ENCODE measurements at regions of chr2 and their contacts with region 1.

Region 1: DNA sequence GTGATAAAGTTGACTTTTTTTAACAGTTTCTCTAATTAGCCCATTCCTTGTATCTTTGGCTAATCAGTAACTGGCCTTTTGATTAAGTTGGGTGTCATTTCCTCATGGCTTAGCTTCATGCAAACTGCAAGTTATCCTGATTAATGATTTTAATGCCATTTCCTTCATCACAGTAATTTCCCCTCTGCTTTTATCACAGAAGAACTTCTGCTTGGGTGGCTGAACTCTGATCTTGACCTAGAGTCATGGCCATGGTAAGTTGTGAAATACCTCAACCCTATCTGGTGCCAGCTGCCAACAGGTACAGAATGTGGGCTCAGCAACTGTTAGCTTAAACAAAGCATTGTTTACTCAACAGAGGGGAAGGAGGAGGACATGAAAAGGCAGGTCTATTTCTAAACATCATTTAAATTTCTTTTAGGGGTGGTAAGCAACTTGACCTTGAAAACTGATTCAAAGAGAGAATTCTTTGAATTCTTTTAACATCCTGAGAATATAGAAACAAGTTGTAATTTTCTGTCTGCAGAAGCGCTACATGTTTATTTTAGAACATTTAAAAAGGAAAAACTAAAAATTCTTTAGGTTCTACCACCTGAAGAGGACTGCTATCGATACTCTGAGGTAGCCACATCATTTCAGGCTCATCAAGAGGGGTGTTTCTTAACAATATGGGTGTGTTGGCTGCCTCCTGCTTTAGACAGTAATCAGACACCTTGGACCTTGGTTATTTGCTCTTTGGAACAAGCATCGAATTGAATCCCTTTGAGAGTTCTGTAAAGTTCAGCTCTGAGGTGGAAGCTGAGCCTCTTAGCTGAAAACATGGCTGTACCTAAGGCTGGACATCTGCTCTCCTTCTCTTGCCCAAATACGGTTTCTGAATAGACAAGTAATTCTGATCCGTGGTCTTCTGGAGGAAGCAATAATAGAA is 39.7 kb downstream of the ANXA4 start:
- DNase-seq: peak; percentile 73
- H3K4me3 Mint-ChIP-seq: peak overlapping the region; percentile 15
- H3K27ac Mint-ChIP-seq: peak overlapping the region; percentile 86
- H3K4me1 Mint-ChIP-seq: peaks cover 71% of the 10 kb centered on the region
- H3K27me3 Mint-ChIP-seq: no peaks in the 10 kb centered on the region
- CTCF ChIP-seq: no peak

Region 2: DNA sequence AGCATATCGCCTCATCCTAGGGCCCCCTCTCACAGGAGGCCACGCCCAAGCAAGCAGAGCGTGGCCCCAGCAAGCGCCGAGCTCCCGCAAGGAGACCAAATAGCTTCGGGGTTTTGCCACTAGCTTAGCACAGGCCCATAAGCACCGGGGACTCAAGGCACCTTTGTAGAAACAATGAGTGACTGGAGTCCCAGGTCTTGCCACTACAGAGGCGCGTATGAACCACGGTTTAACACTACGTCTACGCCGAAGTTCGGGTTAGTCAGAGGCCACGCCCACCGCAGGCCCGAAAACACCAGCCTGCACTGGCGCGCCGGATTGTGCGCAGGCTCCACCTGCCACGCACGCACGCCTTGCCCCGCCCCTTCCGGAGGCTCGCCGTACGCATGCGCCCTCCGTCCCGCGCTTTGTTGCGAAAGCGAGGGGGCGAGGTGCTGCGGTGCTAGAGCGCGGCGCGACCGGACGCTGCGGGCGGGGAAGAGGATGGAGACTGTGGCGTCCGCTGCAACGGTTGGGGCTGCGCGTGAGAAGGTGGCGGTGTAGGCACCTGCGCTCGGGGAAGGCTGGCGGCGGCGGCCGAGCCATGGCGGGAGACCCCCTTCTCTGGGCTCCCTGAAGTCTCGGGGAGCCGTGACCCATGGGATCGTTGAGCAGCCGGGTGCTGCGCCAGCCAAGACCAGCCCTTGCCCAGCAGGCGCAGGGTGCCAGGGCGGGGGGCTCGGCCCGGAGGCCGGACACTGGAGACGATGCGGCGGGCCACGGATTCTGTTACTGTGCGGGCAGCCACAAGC is 47.9 kb after region 1 on chr2 and contains the start of gene GMCL1:
- CTCF ChIA-PET with region 1: no interaction called
- intact Hi-C with region 1: loop called (anchors 5 kb)
- DNase-seq: peak; percentile 98
- H3K4me3 Mint-ChIP-seq: peak within 1 kb of the TSS; percentile 98
- H3K27ac Mint-ChIP-seq: peak within 1 kb of the TSS; percentile 94
- H3K4me1 Mint-ChIP-seq: peaks cover 34% of the 10 kb centered on the region
- H3K27me3 Mint-ChIP-seq: no peaks in the 10 kb centered on the region
- CTCF ChIP-seq: no peak
- total RNA-seq, gene GMCL1: 63.8 and 76.4 TPM in 2 replicates

Region 3: GRCh38 chr2:69917854-69918253 is 136.3 kb after region 1 on chr2:
- CTCF ChIA-PET with region 1: no interaction called
- intact Hi-C with region 1: no loop called
- DNase-seq: no peak
- H3K4me3 Mint-ChIP-seq: peak overlapping the region; percentile 76
- H3K27ac Mint-ChIP-seq: peak overlapping the region; percentile 93
- H3K4me1 Mint-ChIP-seq: peaks cover 23% of the 10 kb centered on the region
- H3K27me3 Mint-ChIP-seq: no peaks in the 10 kb centered on the region
- CTCF ChIP-seq: no peak